CD8-positive, alpha-beta memory T cell (primary cell): ENCODE measurements at regions of chr2 and their contacts with region 1.

Region 1: GRCh38 chr2:169479257-169480078 is at the start of gene BBS5:
- DNase-seq: peak; percentile 34 to 79 (median 61)
- H3K4me3 ChIP-seq: peak within 1 kb of the TSS; percentile 75
- H3K4me3 Mint-ChIP-seq: peak within 1 kb of the TSS; percentile 81 to 95 (median 93)
- H3K27ac ChIP-seq: peak within 1 kb of the TSS; percentile 43
- H3K27ac Mint-ChIP-seq: peak within 1 kb of the TSS in 7 of 8 donors; percentile 27 to 87 (median 80)
- H3K4me1 ChIP-seq: no peaks in the 10 kb centered on the region
- H3K4me1 Mint-ChIP-seq: peaks cover 12 to 27% (median 24%) of the 10 kb centered on the region in 3 donors
- H3K27me3 ChIP-seq: no peaks in the 10 kb centered on the region
- H3K27me3 Mint-ChIP-seq: no peaks in the 10 kb centered on the region
- total RNA-seq, gene BBS5: 3.8 to 4.8 TPM

Region 2: DNA sequence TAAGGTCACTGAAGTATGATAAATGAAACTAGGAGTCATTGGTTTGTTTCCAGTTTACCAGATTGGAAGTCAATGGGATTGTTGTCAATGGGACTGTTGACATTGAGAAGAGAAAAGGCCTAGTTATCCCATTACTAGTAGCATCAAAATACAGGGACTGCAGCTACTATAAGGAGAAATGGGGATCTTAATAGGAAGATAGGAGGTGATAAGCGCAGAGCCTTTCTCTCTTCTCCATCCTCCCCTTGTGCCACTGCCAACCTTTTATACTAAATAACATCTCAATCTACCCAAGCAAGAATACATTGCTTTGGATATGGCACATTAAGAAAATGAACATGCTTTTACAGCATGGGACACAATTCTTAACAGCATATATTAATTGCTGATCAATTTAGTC is 10.6 kb before region 1 on chr2:
- CTCF ChIA-PET with region 1: interaction called, 12 read pairs
- POLR2A ChIA-PET with region 1: interaction called, 5 read pairs
- DNase-seq: no peak
- H3K4me3 ChIP-seq: no peak overlapping the region
- H3K4me3 Mint-ChIP-seq: no peak overlapping the region
- H3K27ac ChIP-seq: no peak overlapping the region
- H3K27ac Mint-ChIP-seq: no peak overlapping the region
- H3K4me1 ChIP-seq: no peaks in the 10 kb centered on the region
- H3K4me1 Mint-ChIP-seq: peaks cover 0 to 3% (median 3%) of the 10 kb centered on the region in 3 donors
- H3K27me3 ChIP-seq: no peaks in the 10 kb centered on the region
- H3K27me3 Mint-ChIP-seq: no peaks in the 10 kb centered on the region

Region 3: DNA sequence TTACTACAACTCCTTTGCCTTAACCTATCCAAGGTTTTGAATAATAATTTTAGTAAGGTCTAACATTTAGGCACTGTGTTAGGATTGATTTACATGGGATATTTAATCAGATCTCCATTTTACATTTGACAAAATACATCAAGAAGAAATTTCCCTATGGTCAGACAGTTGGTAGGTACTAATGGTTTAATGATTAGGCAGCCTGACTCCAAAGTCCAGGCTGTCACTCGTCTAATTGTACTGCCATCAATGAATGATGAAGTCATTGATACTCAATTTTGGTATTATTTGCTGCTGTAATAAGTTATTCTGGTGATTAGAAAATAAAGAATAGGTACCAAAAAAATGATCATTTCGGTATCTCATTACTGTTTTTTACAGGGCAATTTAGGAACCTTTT is 13.9 kb after region 1 on chr2:
- CTCF ChIA-PET with region 1: interaction called, 12 read pairs
- POLR2A ChIA-PET with region 1: no interaction called
- DNase-seq: no peak
- H3K4me3 ChIP-seq: no peak overlapping the region
- H3K4me3 Mint-ChIP-seq: no peak overlapping the region
- H3K27ac ChIP-seq: no peak overlapping the region
- H3K27ac Mint-ChIP-seq: no peak overlapping the region
- H3K4me1 ChIP-seq: no peaks in the 10 kb centered on the region
- H3K4me1 Mint-ChIP-seq: no peaks in the 10 kb centered on the region
- H3K27me3 ChIP-seq: no peaks in the 10 kb centered on the region
- H3K27me3 Mint-ChIP-seq: no peaks in the 10 kb centered on the region